RWPE1 (cell line): ENCODE measurements at regions of chr7 and their contacts with region 1.

Region 1: GRCh38 chr7:141975806-141976523 is 2.4 kb upstream of the TAS2R38 start:
- DNase-seq: peak; percentile 78
- H3K27ac ChIP-seq: no peak overlapping the region
- CTCF ChIP-seq: peak; percentile 96

Region 2: GRCh38 chr7:142024547-142024946 is 48.6 kb after region 1 on chr7:
- CTCF ChIA-PET with region 1: interaction called, 26 read pairs
- POLR2A ChIA-PET with region 1: no interaction called
- DNase-seq: peak; percentile 61
- H3K27ac ChIP-seq: peak overlapping the region; percentile 74
- CTCF ChIP-seq: no peak; the same call in 1 of the 2 replicates

Region 3: DNA sequence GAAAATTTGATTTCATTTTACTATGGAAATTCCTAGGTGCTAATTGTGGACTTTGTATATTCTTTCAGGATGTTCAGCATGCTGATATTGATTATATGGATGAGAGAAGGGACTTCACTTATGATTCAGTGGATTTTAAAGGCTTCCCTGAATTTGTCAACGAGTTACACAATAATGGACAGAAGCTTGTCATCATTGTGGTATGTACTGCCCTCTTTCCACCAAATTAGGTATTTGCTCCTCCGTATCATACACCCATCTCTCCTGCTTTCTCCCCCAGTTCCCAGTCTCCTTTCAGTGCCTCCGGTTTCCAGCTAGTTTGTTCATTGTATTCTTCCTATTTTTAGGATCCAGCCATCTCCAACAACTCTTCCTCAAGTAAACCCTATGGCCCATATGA is 54.3 kb after region 1 on chr7:
- CTCF ChIA-PET with region 1: interaction called, 26 read pairs
- POLR2A ChIA-PET with region 1: no interaction called
- DNase-seq: peak; percentile 24
- H3K27ac ChIP-seq: no peak overlapping the region
- CTCF ChIP-seq: no peak; the same call in 1 of the 2 replicates